ENCODE measurements at regions of chr2 and their contacts with region 1.

Region 1: DNA sequence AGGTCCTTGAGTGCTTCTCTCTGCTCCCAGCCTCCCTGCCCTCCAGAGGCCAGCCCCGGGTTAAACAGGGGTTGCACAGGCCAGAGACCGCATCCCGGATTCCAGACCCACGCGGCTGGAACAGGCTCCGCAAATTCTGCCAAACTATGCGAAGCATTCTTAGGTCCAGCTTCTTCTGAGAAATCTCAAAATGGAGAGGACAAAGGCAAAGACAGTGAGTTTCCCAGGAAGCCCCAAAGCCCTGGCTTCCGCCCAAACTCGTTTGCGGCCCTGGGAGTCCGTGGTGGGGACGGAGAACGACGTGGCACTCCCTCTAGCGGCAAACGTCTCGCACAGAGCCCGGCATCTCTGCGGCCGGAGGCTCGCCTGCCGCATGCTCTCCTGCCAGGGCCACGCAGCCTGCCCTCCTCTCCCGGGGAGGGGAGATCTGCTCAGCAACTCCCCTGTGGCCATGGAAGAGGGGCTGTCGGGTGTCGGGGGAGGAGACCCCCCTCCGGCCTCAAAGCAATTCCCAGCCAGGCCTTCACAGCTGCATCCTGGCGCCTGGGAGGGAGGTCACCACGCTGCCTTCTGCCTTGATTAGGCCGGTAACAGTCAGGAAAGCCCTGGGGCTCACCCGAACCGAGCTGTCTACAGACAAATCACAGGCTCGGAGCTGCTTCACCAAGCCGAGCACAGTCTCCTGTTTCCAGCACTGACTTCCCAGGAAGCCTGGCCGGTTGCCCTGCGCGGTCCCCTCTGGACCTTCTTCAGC is 33.4 kb upstream of the KLHL29 start:
- DNase-seq: peak; percentile 50
- H3K4me3 ChIP-seq: no peak overlapping the region
- H3K27ac ChIP-seq: no peak overlapping the region
- H3K4me1 ChIP-seq: peaks cover 4% of the 10 kb centered on the region
- H3K27me3 ChIP-seq: peaks cover 6% of the 10 kb centered on the region
- CTCF ChIP-seq: peak; percentile 74 to 95

Region 2: DNA sequence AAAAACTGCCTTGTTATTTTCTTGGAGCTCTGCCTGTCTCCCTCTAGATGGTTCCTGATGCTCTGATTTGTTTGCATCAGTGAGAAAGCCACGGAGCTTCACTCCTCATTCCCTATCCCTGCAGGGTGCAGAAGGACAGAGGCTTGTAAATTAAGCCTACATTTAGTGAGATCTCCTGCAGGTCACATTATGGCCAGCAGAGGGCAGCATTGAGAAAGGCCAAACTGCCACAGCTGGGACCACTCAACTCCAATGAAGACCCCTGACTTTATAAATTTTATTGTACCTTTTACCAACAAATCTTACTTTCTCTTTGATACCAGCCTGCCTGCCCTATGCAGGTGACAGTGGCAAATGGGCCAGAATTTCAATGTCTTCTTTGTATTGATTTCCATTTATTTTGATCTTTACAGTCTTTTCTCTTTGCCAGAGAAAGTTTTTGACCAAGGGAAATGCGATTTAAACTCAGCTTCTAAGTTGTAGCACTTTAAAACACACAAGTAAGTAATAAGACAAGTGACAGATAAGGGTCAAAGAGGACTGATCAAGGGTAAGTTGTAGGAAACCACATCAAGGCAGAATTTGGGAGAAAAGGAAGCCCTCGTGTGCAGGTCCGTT is 995.6 kb before region 1 on chr2:
- CTCF ChIA-PET with region 1: no interaction called
- dilution Hi-C with region 1: no loop called
- in situ Hi-C with region 1: no loop called
- intact Hi-C with region 1: loop called (anchors 5 kb)
- DNase-seq: no peak
- H3K4me3 ChIP-seq: no peak overlapping the region
- H3K27ac ChIP-seq: no peak overlapping the region
- H3K4me1 ChIP-seq: no peaks in the 10 kb centered on the region
- H3K27me3 ChIP-seq: no peaks in the 10 kb centered on the region
- CTCF ChIP-seq: peak; percentile 83 to 84

Region 3: DNA sequence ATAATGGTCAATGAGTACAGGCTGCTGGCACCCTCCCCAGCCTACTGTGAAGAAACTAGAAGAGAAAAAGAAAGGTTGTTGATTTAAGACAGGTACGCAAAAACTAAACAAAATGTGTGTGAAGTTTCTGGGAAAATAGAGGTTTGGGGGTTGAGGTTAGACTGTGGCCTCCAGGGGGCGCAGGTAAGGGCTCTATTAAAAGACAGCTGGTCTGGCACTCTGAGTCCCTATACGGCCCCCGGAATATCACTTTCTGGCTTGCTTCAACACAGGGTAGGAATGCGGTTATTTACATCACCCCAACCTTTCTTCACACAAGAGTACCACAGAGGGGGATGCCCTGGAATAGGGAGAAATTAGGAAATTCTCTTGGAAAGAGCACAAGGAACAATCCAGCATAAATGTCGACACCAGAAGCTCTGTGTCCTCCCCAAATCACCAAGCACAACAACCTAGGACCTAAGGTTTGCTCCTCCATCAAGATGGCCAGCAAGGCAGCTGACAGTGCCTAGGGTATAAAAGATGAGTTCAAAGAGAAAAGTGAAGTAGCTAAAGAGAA is 447.4 kb before region 1 on chr2:
- CTCF ChIA-PET with region 1: no interaction called
- dilution Hi-C with region 1: no loop called
- in situ Hi-C with region 1: no loop called
- intact Hi-C with region 1: loop called (anchors 10 kb)
- DNase-seq: no peak
- H3K4me3 ChIP-seq: no peak overlapping the region
- H3K27ac ChIP-seq: no peak overlapping the region
- H3K4me1 ChIP-seq: peaks cover 7% of the 10 kb centered on the region
- H3K27me3 ChIP-seq: no peaks in the 10 kb centered on the region
- CTCF ChIP-seq: peak; percentile 43 to 48

Region 4: DNA sequence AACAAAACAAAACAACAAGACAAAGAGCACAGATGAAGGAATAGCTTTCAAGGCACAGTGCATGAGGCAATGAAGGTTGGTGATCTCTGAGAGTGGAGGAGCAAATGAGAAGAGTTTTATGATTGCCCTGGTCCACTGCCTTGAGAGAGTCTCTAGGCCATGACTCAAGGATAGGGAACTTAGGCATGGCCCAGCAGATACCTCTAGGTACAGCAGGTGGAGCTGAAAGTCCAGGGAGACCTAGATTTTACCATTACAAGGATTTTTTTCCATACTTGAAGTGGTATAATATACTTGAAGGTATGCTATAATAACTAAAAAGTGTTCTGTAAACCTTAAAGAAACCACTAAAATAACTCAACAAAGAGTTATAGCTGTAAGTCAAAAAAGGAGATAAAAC is 206.1 kb before region 1 on chr2:
- CTCF ChIA-PET with region 1: no interaction called
- dilution Hi-C with region 1: no loop called
- in situ Hi-C with region 1: no loop called
- intact Hi-C with region 1: loop called (anchors 1 kb)
- DNase-seq: no peak
- H3K4me3 ChIP-seq: no peak overlapping the region
- H3K27ac ChIP-seq: no peak overlapping the region
- H3K4me1 ChIP-seq: no peaks in the 10 kb centered on the region
- H3K27me3 ChIP-seq: no peaks in the 10 kb centered on the region
- CTCF ChIP-seq: peak in 1 of 2 donors; percentile 34